Natural killer cell (primary cell): ENCODE measurements at regions of chr20 and their contacts with region 1.

Region 1: GRCh38 chr20:49534255-49534712 is 33.7 kb downstream of the PTGIS start:
- DNase-seq: peak; percentile 49 to 77
- ATAC-seq: peak; percentile 82 to 93 (median 93)
- H3K4me3 ChIP-seq: no peak overlapping the region
- H3K4me3 Mint-ChIP-seq: no peak overlapping the region
- H3K27ac ChIP-seq: no peak overlapping the region
- H3K27ac Mint-ChIP-seq: no peak overlapping the region
- H3K4me1 ChIP-seq: peaks cover 8% of the 10 kb centered on the region
- H3K4me1 Mint-ChIP-seq: peaks cover 10 to 13% of the 10 kb centered on the region in 2 donors
- H3K27me3 ChIP-seq: no peaks in the 10 kb centered on the region
- H3K27me3 Mint-ChIP-seq: peaks cover 0 to 6% of the 10 kb centered on the region in 2 donors
- CTCF ChIP-seq: peak; percentile 87

Region 2: GRCh38 chr20:49207076-49207475 is 327.2 kb before region 1 on chr20:
- intact Hi-C with region 1: no loop called
- DNase-seq: no peak
- ATAC-seq: no peak
- H3K4me3 ChIP-seq: no peak overlapping the region
- H3K4me3 Mint-ChIP-seq: no peak overlapping the region
- H3K27ac ChIP-seq: no peak overlapping the region
- H3K27ac Mint-ChIP-seq: no peak overlapping the region
- H3K4me1 ChIP-seq: no peaks in the 10 kb centered on the region
- H3K4me1 Mint-ChIP-seq: no peaks in the 10 kb centered on the region
- H3K27me3 ChIP-seq: no peaks in the 10 kb centered on the region
- H3K27me3 Mint-ChIP-seq: no peaks in the 10 kb centered on the region
- CTCF ChIP-seq: no peak

Region 3: DNA sequence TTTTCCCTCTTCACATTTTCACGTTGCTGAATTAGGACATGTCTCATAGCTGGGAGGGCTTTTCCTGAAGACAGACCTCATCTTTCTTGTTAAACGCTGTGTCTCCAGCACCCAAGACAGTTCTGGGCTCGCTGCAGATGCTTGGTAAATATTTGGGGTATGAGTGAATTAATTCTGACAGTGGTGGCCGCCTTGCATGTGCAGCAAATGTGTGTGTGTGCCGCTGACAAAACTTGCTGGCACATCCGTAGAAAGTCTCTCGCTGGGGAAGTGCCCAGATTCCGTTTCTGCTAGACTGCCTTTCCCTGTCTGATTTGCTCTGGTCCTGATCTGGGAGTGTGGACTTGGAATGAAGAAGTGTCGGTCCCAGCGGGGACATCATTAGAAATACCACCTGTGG is 208.3 kb before region 1 on chr20:
- intact Hi-C with region 1: no loop called
- DNase-seq: no peak
- ATAC-seq: no peak
- H3K4me3 ChIP-seq: no peak overlapping the region
- H3K4me3 Mint-ChIP-seq: no peak overlapping the region
- H3K27ac ChIP-seq: no peak overlapping the region
- H3K27ac Mint-ChIP-seq: no peak overlapping the region
- H3K4me1 ChIP-seq: peaks cover 10% of the 10 kb centered on the region
- H3K4me1 Mint-ChIP-seq: peaks cover 7 to 20% of the 10 kb centered on the region in 2 donors
- H3K27me3 ChIP-seq: no peaks in the 10 kb centered on the region
- H3K27me3 Mint-ChIP-seq: peaks cover 13 to 18% of the 10 kb centered on the region in 2 donors
- CTCF ChIP-seq: no peak

Region 4: DNA sequence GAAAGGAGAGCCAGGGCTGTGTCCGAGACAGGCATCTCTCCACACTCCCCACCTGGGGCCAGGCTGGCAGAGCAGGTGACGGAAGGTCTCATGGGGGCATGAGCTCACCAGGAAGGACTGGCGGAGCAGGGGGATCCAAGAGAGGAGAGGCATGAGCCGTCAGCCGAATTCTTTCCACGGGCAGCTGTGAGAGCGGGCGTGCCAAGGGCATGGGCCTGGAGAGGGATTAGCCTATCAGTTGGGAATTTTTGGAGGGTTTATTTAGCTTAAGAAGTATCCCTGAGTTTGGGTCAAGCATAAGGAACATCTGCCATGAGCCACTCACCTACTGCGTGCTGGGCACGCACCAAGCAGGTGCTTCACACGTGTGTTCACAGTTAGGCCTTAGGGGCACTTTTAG is 196.2 kb before region 1 on chr20:
- intact Hi-C with region 1: loop called (anchors 1 kb)
- DNase-seq: no peak
- ATAC-seq: no peak
- H3K4me3 ChIP-seq: no peak overlapping the region
- H3K4me3 Mint-ChIP-seq: no peak overlapping the region
- H3K27ac ChIP-seq: no peak overlapping the region
- H3K27ac Mint-ChIP-seq: no peak overlapping the region
- H3K4me1 ChIP-seq: no peaks in the 10 kb centered on the region
- H3K4me1 Mint-ChIP-seq: peaks cover 0 to 5% of the 10 kb centered on the region in 2 donors
- H3K27me3 ChIP-seq: no peaks in the 10 kb centered on the region
- H3K27me3 Mint-ChIP-seq: peaks cover 12 to 15% of the 10 kb centered on the region in 2 donors
- CTCF ChIP-seq: no peak

Region 5: GRCh38 chr20:49384437-49385088 is 149.7 kb before region 1 on chr20:
- intact Hi-C with region 1: loop called (anchors 5 kb)
- DNase-seq: peak; percentile 60 to 67
- ATAC-seq: peak; percentile 42 to 70 (median 57)
- H3K4me3 ChIP-seq: no peak overlapping the region
- H3K4me3 Mint-ChIP-seq: no peak overlapping the region
- H3K27ac ChIP-seq: no peak overlapping the region
- H3K27ac Mint-ChIP-seq: no peak overlapping the region
- H3K4me1 ChIP-seq: no peaks in the 10 kb centered on the region
- H3K4me1 Mint-ChIP-seq: peaks cover 0 to 5% of the 10 kb centered on the region in 2 donors
- H3K27me3 ChIP-seq: peaks cover 5% of the 10 kb centered on the region
- H3K27me3 Mint-ChIP-seq: peaks cover 23 to 24% of the 10 kb centered on the region in 2 donors
- CTCF ChIP-seq: peak; percentile 70

Region 6: GRCh38 chr20:49505518-49505917 is 28.8 kb before region 1 on chr20:
- intact Hi-C with region 1: no loop called
- DNase-seq: no peak
- ATAC-seq: no peak
- H3K4me3 ChIP-seq: no peak overlapping the region
- H3K4me3 Mint-ChIP-seq: no peak overlapping the region
- H3K27ac ChIP-seq: no peak overlapping the region
- H3K27ac Mint-ChIP-seq: no peak overlapping the region
- H3K4me1 ChIP-seq: no peaks in the 10 kb centered on the region
- H3K4me1 Mint-ChIP-seq: no peaks in the 10 kb centered on the region
- H3K27me3 ChIP-seq: no peaks in the 10 kb centered on the region
- H3K27me3 Mint-ChIP-seq: peaks cover 17 to 36% of the 10 kb centered on the region in 2 donors
- CTCF ChIP-seq: no peak

Region 7: GRCh38 chr20:49865559-49865958 is 331.3 kb after region 1 on chr20:
- intact Hi-C with region 1: no loop called
- DNase-seq: no peak
- ATAC-seq: no peak
- H3K4me3 ChIP-seq: no peak overlapping the region
- H3K4me3 Mint-ChIP-seq: no peak overlapping the region
- H3K27ac ChIP-seq: no peak overlapping the region
- H3K27ac Mint-ChIP-seq: no peak overlapping the region
- H3K4me1 ChIP-seq: no peaks in the 10 kb centered on the region
- H3K4me1 Mint-ChIP-seq: peaks cover 5 to 8% of the 10 kb centered on the region in 2 donors
- H3K27me3 ChIP-seq: no peaks in the 10 kb centered on the region
- H3K27me3 Mint-ChIP-seq: no peaks in the 10 kb centered on the region
- CTCF ChIP-seq: no peak